Esophagus muscularis mucosa (tissue), 4 donors: ENCODE measurements at regions of chr2 and their contacts with region 1.

Region 1: GRCh38 chr2:216692636-216693413 is 2.5 kb downstream of the IGFBP5 start:
- DNase-seq: peak; percentile 97
- H3K4me3 ChIP-seq: peak overlapping the region; percentile 70 to 77 (median 74)
- H3K27ac ChIP-seq: peak overlapping the region; percentile 84 to 94 (median 88)
- H3K4me1 ChIP-seq: peaks cover 54 to 98% (median 92%) of the 10 kb centered on the region in 4 donors
- H3K27me3 ChIP-seq: peaks cover 0 to 12% (median 0%) of the 10 kb centered on the region in 4 donors
- CTCF ChIP-seq: no peak
- EP300 ChIP-seq: no peak
- POLR2A ChIP-seq: no peak

Region 2: DNA sequence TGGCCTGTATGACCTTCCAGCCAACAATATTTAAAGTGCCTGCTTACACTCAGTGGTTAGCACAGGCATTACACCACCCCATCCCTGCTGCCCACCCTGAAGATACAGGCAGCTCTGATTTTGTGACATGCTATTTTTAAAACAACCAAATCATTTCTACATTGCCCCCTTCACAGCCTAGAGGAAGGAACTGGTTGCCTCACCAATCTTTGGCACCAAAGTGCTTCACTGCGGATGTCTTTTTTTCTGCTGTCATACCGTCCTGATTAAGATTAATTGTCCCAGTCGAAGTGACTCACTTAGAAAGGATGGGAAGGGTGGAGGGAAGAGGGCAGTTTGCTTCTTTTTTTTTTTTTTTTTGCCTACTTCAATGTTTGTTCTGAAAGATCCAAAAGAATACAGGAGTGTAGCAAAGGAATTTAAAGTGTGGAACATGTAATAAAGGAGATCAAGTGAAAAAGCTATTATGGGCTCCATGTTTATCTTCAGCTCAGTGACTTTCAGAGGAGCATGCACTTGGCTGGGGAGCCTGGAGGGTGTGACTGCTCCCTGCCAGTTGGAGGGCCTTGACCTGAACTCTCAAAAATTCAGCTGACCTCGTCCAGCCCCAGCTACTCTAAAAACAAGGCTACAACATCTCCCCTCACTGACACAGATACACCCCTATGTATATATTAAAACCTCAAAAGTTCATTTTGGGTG is 668.1 kb after region 1 on chr2:
- intact Hi-C with region 1: loop called (anchors 5 kb)
- DNase-seq: peak; percentile 91
- H3K4me3 ChIP-seq: peak overlapping the region in 1 of 4 donors; percentile 1
- H3K27ac ChIP-seq: peak overlapping the region; percentile 82 to 86 (median 84)
- H3K4me1 ChIP-seq: peaks cover 37 to 98% (median 84%) of the 10 kb centered on the region in 4 donors
- H3K27me3 ChIP-seq: no peaks in the 10 kb centered on the region
- CTCF ChIP-seq: peak in 1 of 3 experiments; percentile 33
- EP300 ChIP-seq: no peak
- POLR2A ChIP-seq: no peak

Region 3: GRCh38 chr2:217713395-217714286 is 1020.8 kb after region 1 on chr2:
- intact Hi-C with region 1: loop called (anchors 5 kb)
- DNase-seq: peak; percentile 96
- H3K4me3 ChIP-seq: no peak overlapping the region
- H3K27ac ChIP-seq: peak overlapping the region; percentile 67 to 75 (median 68)
- H3K4me1 ChIP-seq: peaks cover 15 to 57% (median 40%) of the 10 kb centered on the region in 4 donors
- H3K27me3 ChIP-seq: no peaks in the 10 kb centered on the region
- CTCF ChIP-seq: peak; percentile 95 to 99 (median 96)
- EP300 ChIP-seq: no peak
- POLR2A ChIP-seq: no peak